ENCODE measurements at regions of chr18 and their contacts with region 1.

Region 1: DNA sequence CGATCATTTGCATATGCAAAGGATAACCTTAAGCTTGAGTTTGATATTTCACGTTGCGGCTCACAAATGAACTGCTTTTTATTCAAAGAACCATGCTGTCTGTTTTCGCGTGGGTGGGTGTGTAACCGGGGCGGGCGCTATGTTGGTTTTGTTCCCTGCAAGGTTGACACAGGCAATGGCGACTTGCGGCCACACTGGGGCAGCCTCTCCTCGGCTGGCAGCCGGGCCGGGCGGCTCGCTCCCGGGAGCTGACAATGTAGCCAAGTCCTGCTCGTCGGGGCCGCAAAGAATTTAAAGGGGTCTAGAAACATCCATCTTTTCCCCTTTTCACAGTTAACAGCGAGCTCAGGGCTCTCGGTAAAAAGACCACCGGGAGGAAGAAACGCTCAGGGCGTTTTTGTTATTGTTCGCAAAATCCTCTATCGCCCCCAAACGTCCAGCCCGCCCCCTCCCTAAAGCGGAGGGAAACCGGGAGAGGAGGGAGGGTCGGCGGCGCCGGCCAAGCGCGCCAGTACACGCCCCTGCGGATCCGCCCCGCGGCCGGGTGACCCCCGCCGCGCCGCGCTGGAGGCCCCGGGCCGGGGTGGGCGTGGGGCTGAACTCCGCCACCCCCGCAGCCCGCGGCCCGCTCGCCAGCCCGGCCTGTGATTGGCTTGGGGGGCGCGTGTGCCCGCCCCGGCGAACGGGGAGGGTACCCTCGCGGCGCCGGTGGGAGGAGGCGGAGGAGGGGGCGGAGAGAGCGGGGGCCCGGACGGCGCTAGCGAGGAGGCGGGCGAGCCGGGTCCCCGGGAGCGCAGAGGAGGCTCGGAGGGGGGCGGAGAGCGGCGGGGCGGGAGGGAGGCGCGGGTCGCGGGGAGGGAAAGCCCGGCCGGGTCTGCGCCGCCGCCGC is at the start of gene NEDD4L:
- DNase-seq: no peak
- H3K4me3 ChIP-seq: peak within 1 kb of the TSS; percentile 73
- CTCF ChIP-seq: peak; percentile 93

Region 2: GRCh38 chr18:57998461-57998860 is 45.3 kb before region 1 on chr18:
- CTCF ChIA-PET with region 1: no interaction called
- POLR2A ChIA-PET with region 1: no interaction called
- DNase-seq: no peak
- H3K4me3 ChIP-seq: no peak overlapping the region
- CTCF ChIP-seq: no peak

Region 3: DNA sequence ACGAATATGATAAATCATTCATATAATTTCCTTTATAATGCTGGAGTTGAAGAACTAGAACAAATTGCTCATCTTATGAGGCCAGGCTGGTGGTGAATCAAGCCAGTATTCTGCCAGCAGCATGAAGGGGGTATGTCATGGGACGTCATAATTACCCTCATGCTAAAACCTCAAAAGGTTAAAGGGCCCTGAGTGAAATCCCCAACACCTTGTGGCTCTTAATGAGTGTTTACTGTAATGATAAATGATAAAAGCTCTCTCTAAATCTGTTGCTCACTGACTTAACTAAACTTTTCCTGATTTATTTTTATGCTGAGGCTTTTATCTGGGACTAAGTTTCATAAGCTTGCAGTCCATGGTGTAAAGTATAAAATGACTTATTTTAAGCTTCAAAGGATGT is 18.0 kb before region 1 on chr18:
- CTCF ChIA-PET with region 1: interaction called, 22 read pairs
- POLR2A ChIA-PET with region 1: no interaction called
- DNase-seq: no peak
- H3K4me3 ChIP-seq: no peak overlapping the region
- CTCF ChIP-seq: no peak

Region 4: DNA sequence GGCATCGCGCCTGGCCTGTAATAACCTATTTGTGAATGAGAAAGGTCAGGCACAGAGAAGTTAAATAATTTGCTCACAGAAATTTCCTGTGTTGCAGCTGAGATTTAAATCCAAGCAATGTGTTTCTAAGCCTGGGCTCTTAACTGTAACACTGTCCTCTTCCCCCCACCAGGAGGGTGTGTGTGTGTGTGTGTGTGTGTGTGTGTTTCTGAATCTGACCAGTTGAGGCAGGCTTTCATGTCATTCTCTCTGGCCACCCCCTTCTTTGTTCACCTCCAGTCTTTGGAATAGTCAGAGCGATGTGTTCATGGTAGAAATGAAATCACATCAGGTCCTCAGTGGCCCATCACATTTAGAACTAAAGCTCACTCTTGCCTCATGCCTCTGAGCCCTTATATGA is 81.4 kb after region 1 on chr18:
- CTCF ChIA-PET with region 1: interaction called, 43 read pairs
- POLR2A ChIA-PET with region 1: interaction called, 3 read pairs
- DNase-seq: no peak
- H3K4me3 ChIP-seq: no peak overlapping the region
- CTCF ChIP-seq: no peak

Region 5: GRCh38 chr18:58135701-58136331 is 92.1 kb after region 1 on chr18:
- CTCF ChIA-PET with region 1: interaction called, 14 read pairs
- POLR2A ChIA-PET with region 1: no interaction called
- DNase-seq: no peak
- H3K4me3 ChIP-seq: no peak overlapping the region
- CTCF ChIP-seq: peak; percentile 71